ENCODE measurements at regions of chr1 and their contacts with region 1.

Region 1: DNA sequence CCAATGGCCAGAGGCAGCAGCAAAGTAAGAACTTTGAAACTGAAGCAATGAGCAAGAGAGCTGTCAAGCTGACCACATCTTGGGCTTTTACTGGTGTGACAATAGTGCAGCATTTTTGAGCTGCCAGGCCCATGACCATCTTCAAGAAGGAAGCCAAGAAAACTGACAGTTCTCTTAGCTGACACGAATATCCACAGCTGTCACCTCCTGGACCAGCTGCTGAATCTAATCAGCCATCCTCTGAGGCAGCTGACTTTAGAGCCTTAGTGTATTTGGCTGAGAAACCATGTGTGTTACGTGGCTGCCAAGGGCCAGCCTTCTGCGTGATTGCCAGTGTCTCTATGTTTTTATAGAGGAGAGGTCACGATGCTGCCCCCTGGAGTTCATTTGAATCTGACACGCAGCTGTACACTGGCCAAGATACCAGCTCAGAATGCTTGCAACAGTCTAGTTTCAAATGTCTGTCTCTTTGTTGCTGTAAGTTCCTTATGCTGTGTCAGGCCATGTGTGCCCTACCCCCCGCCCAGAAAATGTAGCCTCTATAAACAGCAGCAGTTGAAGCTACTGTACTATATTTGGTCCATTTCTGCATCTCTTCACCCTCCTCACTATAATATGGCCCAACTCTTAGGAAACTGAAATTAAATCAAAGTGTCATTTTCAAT is 39.7 kb downstream of the PALMD start:
- DNase-seq: peak; percentile 58
- H3K4me3 Mint-ChIP-seq: no peak overlapping the region
- H3K27ac Mint-ChIP-seq: no peak overlapping the region
- H3K4me1 Mint-ChIP-seq: no peaks in the 10 kb centered on the region
- H3K27me3 Mint-ChIP-seq: peaks cover 18% of the 10 kb centered on the region

Region 2: GRCh38 chr1:99180343-99180808 is 505.3 kb before region 1 on chr1:
- CTCF ChIA-PET with region 1: interaction called, 10 read pairs
- DNase-seq: peak; percentile 76
- H3K4me3 Mint-ChIP-seq: no peak overlapping the region
- H3K27ac Mint-ChIP-seq: no peak overlapping the region
- H3K4me1 Mint-ChIP-seq: no peaks in the 10 kb centered on the region
- H3K27me3 Mint-ChIP-seq: no peaks in the 10 kb centered on the region

Region 3: DNA sequence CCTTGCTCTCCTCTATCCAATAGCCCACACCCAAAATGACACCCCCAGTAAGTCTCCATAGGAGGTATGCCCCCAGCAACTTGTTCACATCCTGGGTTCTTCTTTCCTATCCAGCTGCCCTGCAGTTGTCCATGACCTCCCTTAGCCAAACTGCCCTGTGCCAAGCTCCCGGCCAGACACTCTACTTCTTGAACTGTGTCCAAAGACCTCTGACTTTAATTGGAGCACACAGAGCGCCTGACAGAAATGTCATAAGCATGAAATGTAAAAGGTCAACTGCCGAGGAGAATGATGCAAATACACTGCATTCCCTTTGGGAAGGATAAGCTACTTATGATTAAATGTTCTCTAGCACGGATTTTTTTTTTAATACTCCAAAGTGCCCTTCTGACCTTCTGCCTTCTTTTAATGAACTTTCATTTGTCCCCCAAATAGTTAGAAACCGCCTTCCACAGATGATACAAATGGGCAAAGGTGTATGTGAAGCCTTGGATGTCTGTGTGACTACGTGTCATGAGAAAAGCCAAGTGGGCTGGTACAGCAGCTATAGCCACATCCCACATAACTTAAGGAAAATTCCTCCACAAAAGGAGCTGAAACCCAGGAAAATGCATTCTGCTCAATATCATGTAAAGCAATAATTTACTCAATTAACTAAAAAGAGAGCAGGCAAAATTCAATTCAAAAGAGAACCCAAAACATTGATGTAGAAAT is 13.0 kb before region 1 on chr1:
- CTCF ChIA-PET with region 1: no interaction called
- DNase-seq: no peak
- H3K4me3 Mint-ChIP-seq: no peak overlapping the region
- H3K27ac Mint-ChIP-seq: no peak overlapping the region
- H3K4me1 Mint-ChIP-seq: no peaks in the 10 kb centered on the region
- H3K27me3 Mint-ChIP-seq: peaks cover 4% of the 10 kb centered on the region

Measured in activated naive CD4-positive, alpha-beta T cell treated with anti-CD3 and anti-CD28 coated beads, Interleukin-2, amount 10 ng/mL, durations not matched to agents 7 days and 5 days (primary cell).